Astrocyte of the cerebellum (primary cell): ENCODE measurements at regions of chr17 and their contacts with region 1.

Region 1: DNA sequence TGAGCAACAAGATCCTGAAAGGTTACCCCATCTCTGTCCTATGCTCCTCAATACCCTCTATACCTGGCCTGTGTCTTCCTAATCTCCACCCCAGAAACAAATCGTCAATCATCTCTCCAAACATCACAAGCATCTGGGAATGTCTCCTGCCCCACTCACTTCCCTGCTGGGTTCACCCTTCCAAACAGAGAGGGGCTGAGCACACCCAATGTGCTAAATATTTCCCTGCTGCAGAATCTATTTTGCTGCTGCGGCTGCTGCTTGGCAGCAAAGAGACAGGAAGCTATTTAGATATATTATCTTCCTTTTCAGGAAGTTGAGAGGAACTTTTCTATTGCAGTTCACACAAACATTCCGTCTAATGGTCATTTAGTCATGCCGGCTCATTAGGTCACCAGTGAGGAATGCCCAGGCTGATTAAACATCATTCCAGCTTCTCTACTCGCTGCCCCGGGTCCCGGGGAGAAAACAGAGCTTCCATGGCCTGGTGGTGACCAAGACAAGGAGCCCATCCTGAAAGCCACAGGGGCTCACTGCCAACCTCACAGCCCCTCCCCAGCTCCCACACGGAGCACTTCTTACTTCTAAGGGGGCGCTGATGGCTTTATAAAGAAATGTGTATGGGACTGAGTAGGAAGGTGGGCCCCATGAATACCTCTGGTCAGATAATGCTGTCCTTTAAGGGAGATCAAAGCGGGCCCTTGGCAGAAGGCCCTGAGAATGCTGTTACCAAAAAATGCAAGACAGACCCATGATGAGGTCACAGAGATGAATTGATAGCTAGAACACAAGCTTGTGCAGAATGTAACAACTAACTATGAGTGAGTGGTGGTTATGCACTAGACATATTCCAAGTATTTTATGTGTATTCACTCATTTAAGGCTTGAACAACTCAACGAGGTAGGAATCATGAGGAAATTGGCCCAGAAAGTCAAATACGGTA is 218.3 kb downstream of the SOX9 start:
- DNase-seq: peak; percentile 90
- H3K4me3 ChIP-seq: no peak overlapping the region
- CTCF ChIP-seq: no peak

Region 2: DNA sequence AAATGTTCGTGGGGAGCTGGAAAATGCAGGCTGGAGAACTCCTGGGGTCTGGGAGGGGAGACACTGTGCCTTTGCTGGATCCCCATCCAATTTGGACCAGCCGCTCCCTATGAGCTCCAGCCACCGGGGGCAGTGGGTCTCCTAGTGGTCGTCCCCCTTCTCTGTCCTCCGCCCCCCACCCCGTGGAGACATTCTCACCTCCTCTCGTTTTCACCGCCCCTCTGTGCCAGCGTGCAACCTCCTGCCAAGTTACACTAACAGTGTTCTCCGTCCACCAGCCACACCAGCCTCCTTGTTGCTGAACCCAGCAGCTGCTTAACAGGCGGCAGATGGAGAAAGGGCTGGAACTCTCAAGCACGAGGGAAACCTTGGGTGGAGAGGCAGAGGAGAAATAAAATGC is 285.7 kb before region 1 on chr17:
- in situ Hi-C with region 1: no loop called
- DNase-seq: no peak
- H3K4me3 ChIP-seq: no peak overlapping the region
- CTCF ChIP-seq: no peak

Region 3: GRCh38 chr17:72297326-72298115 is 41.6 kb before region 1 on chr17:
- in situ Hi-C with region 1: loop called (anchors 5 kb)
- DNase-seq: no peak
- H3K4me3 ChIP-seq: no peak overlapping the region
- CTCF ChIP-seq: no peak

Region 4: DNA sequence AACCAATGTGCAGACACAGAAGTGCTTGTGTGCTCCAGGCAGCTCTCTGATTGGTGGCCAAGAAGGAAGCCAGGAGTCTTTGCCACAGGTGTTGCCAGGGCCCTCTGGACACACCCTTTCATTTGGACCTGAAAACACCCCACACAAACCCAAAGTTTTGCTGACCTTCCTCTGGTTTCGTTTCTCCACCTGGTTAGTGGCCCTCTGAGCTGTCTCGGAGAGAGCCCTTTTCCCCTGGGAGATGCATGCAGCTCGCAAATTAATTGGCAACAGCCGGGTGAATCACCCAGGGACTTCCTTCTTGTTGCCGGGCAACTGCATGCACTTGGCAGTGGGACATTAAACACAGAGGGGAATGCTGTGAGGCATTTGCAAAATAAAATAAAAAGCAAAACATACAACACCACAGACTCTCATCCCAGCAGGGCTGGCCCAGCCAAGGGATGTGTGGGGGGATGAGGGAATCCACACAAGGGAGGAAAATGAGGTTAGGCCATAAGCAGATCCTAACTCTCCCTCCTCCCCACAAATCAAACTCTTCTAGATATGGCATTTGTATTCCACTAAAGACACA is 68.3 kb after region 1 on chr17:
- in situ Hi-C with region 1: loop called (anchors 5 kb)
- DNase-seq: peak; percentile 95
- H3K4me3 ChIP-seq: no peak overlapping the region
- CTCF ChIP-seq: no peak